CD8-positive, alpha-beta T cell (primary cell): ENCODE measurements at regions of chr2 and their contacts with region 1.

Region 1: GRCh38 chr2:44955593-44956392 is 14.3 kb downstream of the SIX3 start:
- DNase-seq: peak; percentile 55 to 83 (median 66)
- ATAC-seq: peak; percentile 86
- H3K4me3 ChIP-seq: peak overlapping the region in 1 of 2 experiments; percentile 27
- H3K4me3 Mint-ChIP-seq: peak overlapping the region; percentile 22
- H3K27ac ChIP-seq: no peak overlapping the region
- H3K27ac Mint-ChIP-seq: no peak overlapping the region
- H3K4me1 ChIP-seq: peaks cover 18% of the 10 kb centered on the region
- H3K4me1 Mint-ChIP-seq: peaks cover 25% of the 10 kb centered on the region
- H3K27me3 ChIP-seq: peaks cover 13% of the 10 kb centered on the region in 2 experiments
- H3K27me3 Mint-ChIP-seq: peaks cover 58% of the 10 kb centered on the region
- CTCF ChIP-seq: peak; percentile 69

Region 2: GRCh38 chr2:43877782-43878464 is 1077.9 kb before region 1 on chr2:
- CTCF ChIA-PET with region 1: interaction called, 4 read pairs
- POLR2A ChIA-PET with region 1: no interaction called
- intact Hi-C with region 1: loop called (anchors 1 to 10 kb)
- DNase-seq: peak; percentile 26 to 68 (median 53)
- ATAC-seq: peak; percentile 86
- H3K4me3 ChIP-seq: no peak overlapping the region
- H3K4me3 Mint-ChIP-seq: peak overlapping the region; percentile 50
- H3K27ac ChIP-seq: no peak overlapping the region
- H3K27ac Mint-ChIP-seq: no peak overlapping the region
- H3K4me1 ChIP-seq: no peaks in the 10 kb centered on the region
- H3K4me1 Mint-ChIP-seq: peaks cover 7% of the 10 kb centered on the region
- H3K27me3 ChIP-seq: no peaks in the 10 kb centered on the region
- H3K27me3 Mint-ChIP-seq: peaks cover 22% of the 10 kb centered on the region
- CTCF ChIP-seq: peak; percentile 92

Region 3: GRCh38 chr2:43950383-43951008 is 1005.3 kb before region 1 on chr2:
- CTCF ChIA-PET with region 1: no interaction called
- POLR2A ChIA-PET with region 1: no interaction called
- intact Hi-C with region 1: loop called in 1 of 2 experiments (anchors 5 kb)
- DNase-seq: peak in 3 of 9 experiments; percentile 6 to 58 (median 48)
- ATAC-seq: no peak
- H3K4me3 ChIP-seq: no peak overlapping the region
- H3K4me3 Mint-ChIP-seq: no peak overlapping the region
- H3K27ac ChIP-seq: no peak overlapping the region
- H3K27ac Mint-ChIP-seq: no peak overlapping the region
- H3K4me1 ChIP-seq: no peaks in the 10 kb centered on the region
- H3K4me1 Mint-ChIP-seq: no peaks in the 10 kb centered on the region
- H3K27me3 ChIP-seq: no peaks in the 10 kb centered on the region
- H3K27me3 Mint-ChIP-seq: no peaks in the 10 kb centered on the region
- CTCF ChIP-seq: peak; percentile 26

Region 4: GRCh38 chr2:44044281-44044720 is 911.5 kb before region 1 on chr2:
- CTCF ChIA-PET with region 1: interaction called, 28 read pairs
- POLR2A ChIA-PET with region 1: interaction called, 5 read pairs
- intact Hi-C with region 1: loop called in 1 of 2 experiments (anchors 1 kb)
- DNase-seq: peak; percentile 50 to 84 (median 73)
- ATAC-seq: peak; percentile 99
- H3K4me3 ChIP-seq: no peak overlapping the region
- H3K4me3 Mint-ChIP-seq: no peak overlapping the region
- H3K27ac ChIP-seq: no peak overlapping the region
- H3K27ac Mint-ChIP-seq: no peak overlapping the region
- H3K4me1 ChIP-seq: no peaks in the 10 kb centered on the region
- H3K4me1 Mint-ChIP-seq: peaks cover 2% of the 10 kb centered on the region
- H3K27me3 ChIP-seq: no peaks in the 10 kb centered on the region
- H3K27me3 Mint-ChIP-seq: peaks cover 5% of the 10 kb centered on the region
- CTCF ChIP-seq: peak; percentile 76

Region 5: GRCh38 chr2:44244129-44244871 is 711.5 kb before region 1 on chr2:
- CTCF ChIA-PET with region 1: interaction called, 3 read pairs
- POLR2A ChIA-PET with region 1: no interaction called
- intact Hi-C with region 1: loop called in 1 of 2 experiments (anchors 5 kb)
- DNase-seq: peak; percentile 13 to 86 (median 54)
- ATAC-seq: peak; percentile 92
- H3K4me3 ChIP-seq: peak overlapping the region; percentile 12 to 57
- H3K4me3 Mint-ChIP-seq: peak overlapping the region; percentile 88
- H3K27ac ChIP-seq: peak overlapping the region in 1 of 2 experiments; percentile 26
- H3K27ac Mint-ChIP-seq: peak overlapping the region; percentile 69
- H3K4me1 ChIP-seq: peaks cover 12% of the 10 kb centered on the region
- H3K4me1 Mint-ChIP-seq: peaks cover 33% of the 10 kb centered on the region
- H3K27me3 ChIP-seq: no peaks in the 10 kb centered on the region
- H3K27me3 Mint-ChIP-seq: no peaks in the 10 kb centered on the region
- CTCF ChIP-seq: peak; percentile 86

Region 6: GRCh38 chr2:44392338-44392943 is 563.4 kb before region 1 on chr2:
- CTCF ChIA-PET with region 1: interaction called, 13 read pairs
- POLR2A ChIA-PET with region 1: no interaction called
- intact Hi-C with region 1: loop called in 1 of 2 experiments (anchors 1 kb)
- DNase-seq: peak in 8 of 9 experiments; percentile 11 to 60 (median 52)
- ATAC-seq: no peak
- H3K4me3 ChIP-seq: no peak overlapping the region
- H3K4me3 Mint-ChIP-seq: no peak overlapping the region
- H3K27ac ChIP-seq: no peak overlapping the region
- H3K27ac Mint-ChIP-seq: no peak overlapping the region
- H3K4me1 ChIP-seq: no peaks in the 10 kb centered on the region
- H3K4me1 Mint-ChIP-seq: peaks cover 6% of the 10 kb centered on the region
- H3K27me3 ChIP-seq: no peaks in the 10 kb centered on the region
- H3K27me3 Mint-ChIP-seq: no peaks in the 10 kb centered on the region
- CTCF ChIP-seq: peak; percentile 77